GM12878 (cell line): ENCODE measurements at regions of chr1 and their contacts with region 1.

Region 1: DNA sequence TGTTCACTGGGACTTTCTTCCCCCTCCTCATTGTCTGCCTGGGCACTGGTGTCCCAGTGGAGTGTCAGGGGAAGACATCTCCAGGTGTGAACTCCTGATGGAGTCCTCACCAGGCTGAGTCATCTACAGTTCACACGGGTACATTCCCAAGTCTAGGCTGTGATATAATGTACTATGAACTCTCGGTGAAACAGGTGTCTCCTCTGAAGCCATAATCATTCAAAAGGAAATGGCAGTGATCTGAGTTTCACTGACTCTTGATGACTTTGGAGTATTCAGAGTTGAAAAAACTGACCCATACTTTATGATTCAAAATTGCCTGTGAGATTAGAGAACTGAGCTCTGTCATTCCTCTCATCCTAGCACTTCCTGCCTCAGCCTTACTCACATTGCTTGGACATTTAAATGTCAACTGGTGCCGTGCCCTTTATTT is 9.1 kb downstream of the LAMC2 start:
- DNase-seq: no peak
- ATAC-seq: peak; percentile 70
- H3K4me3 ChIP-seq: peak overlapping the region; percentile 42; the same call in 1 of the 2 replicates
- H3K27ac ChIP-seq: 0 out of 2 replicates have a peak overlapping the region, but pooled peaks have one; percentile 14
- H3K4me1 ChIP-seq: peaks cover 12% of the 10 kb centered on the region
- H3K27me3 ChIP-seq: no peaks in the 10 kb centered on the region
- CTCF ChIP-seq: no peak
- EP300 ChIP-seq: no peak
- POLR2A ChIP-seq: no peak
- RAD21 ChIP-seq: no peak

Region 2: DNA sequence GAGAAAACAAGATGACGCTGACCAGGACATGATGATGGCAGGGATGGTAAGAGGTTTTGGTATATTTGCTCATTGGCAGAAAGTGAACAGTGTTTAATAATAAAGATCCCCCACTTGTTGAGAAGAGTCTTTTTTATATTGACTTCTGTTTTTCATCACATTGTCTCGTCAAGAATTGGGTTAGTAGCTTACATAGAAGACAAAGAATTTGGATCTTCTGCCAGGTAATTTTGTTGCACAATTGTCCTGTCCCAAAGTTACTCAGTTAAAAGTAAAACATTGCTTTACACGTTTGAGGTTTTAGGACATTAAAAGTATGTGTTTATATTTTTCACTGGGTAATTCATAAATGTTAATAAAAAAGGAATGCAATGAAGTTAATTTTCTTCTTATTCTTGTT is 57.4 kb before region 1 on chr1:
- CTCF ChIA-PET with region 1: no interaction called
- POLR2A ChIA-PET with region 1: no interaction called
- RAD21 ChIA-PET with region 1: no interaction called
- SMC1A ChIA-PET with region 1: no interaction called
- in situ Hi-C with region 1: no loop called
- intact Hi-C with region 1: no loop called
- DNase-seq: no peak
- ATAC-seq: no peak
- H3K4me3 ChIP-seq: no peak overlapping the region
- H3K27ac ChIP-seq: no peak overlapping the region
- H3K4me1 ChIP-seq: no peaks in the 10 kb centered on the region; the same call in 1 of the 2 replicates
- H3K27me3 ChIP-seq: no peaks in the 10 kb centered on the region
- CTCF ChIP-seq: no peak
- EP300 ChIP-seq: no peak
- POLR2A ChIP-seq: no peak
- RAD21 ChIP-seq: no peak

Region 3: GRCh38 chr1:183180634-183181056 is 14.5 kb before region 1 on chr1:
- CTCF ChIA-PET with region 1: interaction called, 10 read pairs
- POLR2A ChIA-PET with region 1: interaction called, 6 read pairs
- RAD21 ChIA-PET with region 1: interaction called, 6 read pairs
- SMC1A ChIA-PET with region 1: interaction called, 12 read pairs
- in situ Hi-C with region 1: no loop called
- intact Hi-C with region 1: no loop called
- DNase-seq: peak; percentile 57
- ATAC-seq: peak; percentile 97
- H3K4me3 ChIP-seq: no peak overlapping the region
- H3K27ac ChIP-seq: peak overlapping the region; percentile 86
- H3K4me1 ChIP-seq: peaks cover 11% of the 10 kb centered on the region
- H3K27me3 ChIP-seq: no peaks in the 10 kb centered on the region
- CTCF ChIP-seq: no peak
- EP300 ChIP-seq: peak; percentile 63 to 64; a peak in 1 of 4 replicates
- POLR2A ChIP-seq: no peak
- RAD21 ChIP-seq: no peak

Region 4: DNA sequence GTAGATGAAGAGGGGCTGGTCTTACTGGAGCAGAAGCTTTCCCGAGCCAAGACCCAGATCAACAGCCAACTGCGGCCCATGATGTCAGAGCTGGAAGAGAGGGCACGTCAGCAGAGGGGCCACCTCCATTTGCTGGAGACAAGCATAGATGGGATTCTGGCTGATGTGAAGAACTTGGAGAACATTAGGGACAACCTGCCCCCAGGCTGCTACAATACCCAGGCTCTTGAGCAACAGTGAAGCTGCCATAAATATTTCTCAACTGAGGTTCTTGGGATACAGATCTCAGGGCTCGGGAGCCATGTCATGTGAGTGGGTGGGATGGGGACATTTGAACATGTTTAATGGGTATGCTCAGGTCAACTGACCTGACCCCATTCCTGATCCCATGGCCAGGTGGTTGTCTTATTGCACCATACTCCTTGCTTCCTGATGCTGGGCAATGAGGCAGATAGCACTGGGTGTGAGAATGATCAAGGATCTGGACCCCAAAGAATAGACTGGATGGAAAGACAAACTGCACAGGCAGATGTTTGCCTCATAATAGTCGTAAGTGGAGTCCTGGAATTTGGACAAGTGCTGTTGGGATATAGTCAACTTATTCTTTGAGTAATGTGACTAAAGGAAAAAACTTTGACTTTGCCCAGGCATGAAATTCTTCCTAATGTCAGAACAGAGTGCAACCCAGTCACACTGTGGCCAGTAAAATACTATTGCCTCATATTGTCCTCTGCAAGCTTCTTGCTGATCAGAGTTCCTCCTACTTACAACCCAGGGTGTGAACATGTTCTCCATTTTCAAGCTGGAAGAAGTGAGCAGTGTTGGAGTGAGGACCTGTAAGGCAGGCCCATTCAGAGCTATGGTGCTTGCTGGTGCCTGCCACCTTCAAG is 48.2 kb after region 1 on chr1:
- CTCF ChIA-PET with region 1: interaction called, 3 read pairs
- POLR2A ChIA-PET with region 1: interaction called, 3 read pairs
- RAD21 ChIA-PET with region 1: no interaction called
- SMC1A ChIA-PET with region 1: interaction called, 10 read pairs
- in situ Hi-C with region 1: no loop called
- intact Hi-C with region 1: no loop called
- DNase-seq: no peak
- ATAC-seq: no peak
- H3K4me3 ChIP-seq: no peak overlapping the region
- H3K27ac ChIP-seq: no peak overlapping the region
- H3K4me1 ChIP-seq: no peaks in the 10 kb centered on the region
- H3K27me3 ChIP-seq: no peaks in the 10 kb centered on the region
- CTCF ChIP-seq: no peak
- EP300 ChIP-seq: no peak
- POLR2A ChIP-seq: no peak
- RAD21 ChIP-seq: no peak